ENCODE measurements at regions of chr20 and their contacts with region 1.

Region 1: GRCh38 chr20:38764567-38765355 is 16.5 kb downstream of the ACTR5 start:
- DNase-seq: peak; percentile 22
- H3K4me3 Mint-ChIP-seq: no peak overlapping the region
- H3K27ac Mint-ChIP-seq: no peak overlapping the region
- H3K4me1 Mint-ChIP-seq: peaks cover 16% of the 10 kb centered on the region
- H3K27me3 Mint-ChIP-seq: no peaks in the 10 kb centered on the region

Region 2: DNA sequence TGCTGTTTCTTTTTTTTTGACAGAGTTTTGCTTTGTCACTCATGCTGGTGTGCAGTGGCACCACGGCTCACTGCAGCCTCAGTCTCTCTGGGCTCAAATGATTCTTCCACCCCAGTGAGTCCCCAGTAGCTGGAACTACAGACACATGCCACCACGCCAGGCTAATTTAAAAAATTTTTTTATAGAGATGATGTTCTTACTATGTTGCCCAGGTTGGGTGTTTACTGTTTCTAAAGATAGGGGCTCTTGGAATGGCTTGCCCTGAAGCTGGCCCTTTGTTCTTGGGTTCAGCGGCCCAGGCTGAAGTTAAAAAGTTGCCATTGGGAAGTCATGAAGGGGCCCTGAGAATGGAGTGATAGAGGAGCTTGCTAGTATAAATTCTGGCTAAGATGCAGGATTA is 275.6 kb before region 1 on chr20:
- CTCF ChIA-PET with region 1: no interaction called
- POLR2A ChIA-PET with region 1: no interaction called
- DNase-seq: no peak
- H3K4me3 Mint-ChIP-seq: no peak overlapping the region
- H3K27ac Mint-ChIP-seq: no peak overlapping the region
- H3K4me1 Mint-ChIP-seq: no peaks in the 10 kb centered on the region
- H3K27me3 Mint-ChIP-seq: no peaks in the 10 kb centered on the region

Region 3: DNA sequence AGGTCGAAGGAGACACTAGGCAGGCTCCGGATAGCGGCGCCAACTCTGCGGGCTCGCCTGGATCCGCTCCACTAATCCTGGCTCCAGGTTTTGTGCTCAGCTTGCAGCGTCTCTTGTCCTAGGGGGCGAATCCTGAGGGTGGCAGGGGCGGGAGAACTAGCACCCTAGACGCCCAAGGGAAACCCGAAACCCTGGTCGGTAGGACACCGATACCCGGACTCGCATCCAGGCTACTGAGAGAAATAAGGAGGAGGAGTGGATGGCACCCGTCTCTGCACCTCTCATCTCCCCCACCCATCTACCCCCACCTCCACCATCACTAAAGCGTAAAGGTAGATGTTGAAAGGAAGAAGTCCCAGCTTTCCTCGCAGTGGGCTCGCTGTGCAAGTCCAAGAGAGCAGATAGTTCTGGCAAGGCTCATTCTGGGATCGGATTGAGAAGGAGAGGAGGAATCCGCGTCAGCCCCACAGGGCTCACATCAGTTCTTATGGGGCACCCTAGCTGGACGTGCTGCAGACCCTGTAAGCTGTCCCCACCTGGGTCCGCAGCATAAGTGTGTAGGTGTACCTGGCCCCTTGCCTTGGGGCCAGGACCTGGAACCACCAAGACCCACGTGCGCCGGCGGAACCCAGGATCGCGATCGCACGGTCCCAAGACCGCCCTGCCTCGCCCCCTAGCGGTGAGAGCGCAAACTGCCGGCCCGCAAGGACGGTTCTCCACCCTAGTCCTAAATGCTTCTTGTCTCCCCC is 33.6 kb before region 1 on chr20:
- CTCF ChIA-PET with region 1: no interaction called
- POLR2A ChIA-PET with region 1: no interaction called
- DNase-seq: peak; percentile 69
- H3K4me3 Mint-ChIP-seq: peak overlapping the region; percentile 34
- H3K27ac Mint-ChIP-seq: no peak overlapping the region
- H3K4me1 Mint-ChIP-seq: peaks cover 41% of the 10 kb centered on the region
- H3K27me3 Mint-ChIP-seq: peaks cover 91% of the 10 kb centered on the region

Region 4: GRCh38 chr20:38751360-38751976 is 13.3 kb before region 1 on chr20:
- CTCF ChIA-PET with region 1: interaction called, 22 read pairs
- POLR2A ChIA-PET with region 1: no interaction called
- DNase-seq: peak; percentile 42
- H3K4me3 Mint-ChIP-seq: no peak overlapping the region
- H3K27ac Mint-ChIP-seq: no peak overlapping the region
- H3K4me1 Mint-ChIP-seq: peaks cover 21% of the 10 kb centered on the region
- H3K27me3 Mint-ChIP-seq: no peaks in the 10 kb centered on the region

Measured in activated CD4-positive, alpha-beta T cell treated with anti-CD3 and anti-CD28 coated beads, Interleukin-2, amount 10 ng/mL, durations not matched to agents 7 days and 5 days (primary cell).